HEK293 (cell line): ENCODE measurements at regions of chr16 and their contacts with region 1.

Region 1: DNA sequence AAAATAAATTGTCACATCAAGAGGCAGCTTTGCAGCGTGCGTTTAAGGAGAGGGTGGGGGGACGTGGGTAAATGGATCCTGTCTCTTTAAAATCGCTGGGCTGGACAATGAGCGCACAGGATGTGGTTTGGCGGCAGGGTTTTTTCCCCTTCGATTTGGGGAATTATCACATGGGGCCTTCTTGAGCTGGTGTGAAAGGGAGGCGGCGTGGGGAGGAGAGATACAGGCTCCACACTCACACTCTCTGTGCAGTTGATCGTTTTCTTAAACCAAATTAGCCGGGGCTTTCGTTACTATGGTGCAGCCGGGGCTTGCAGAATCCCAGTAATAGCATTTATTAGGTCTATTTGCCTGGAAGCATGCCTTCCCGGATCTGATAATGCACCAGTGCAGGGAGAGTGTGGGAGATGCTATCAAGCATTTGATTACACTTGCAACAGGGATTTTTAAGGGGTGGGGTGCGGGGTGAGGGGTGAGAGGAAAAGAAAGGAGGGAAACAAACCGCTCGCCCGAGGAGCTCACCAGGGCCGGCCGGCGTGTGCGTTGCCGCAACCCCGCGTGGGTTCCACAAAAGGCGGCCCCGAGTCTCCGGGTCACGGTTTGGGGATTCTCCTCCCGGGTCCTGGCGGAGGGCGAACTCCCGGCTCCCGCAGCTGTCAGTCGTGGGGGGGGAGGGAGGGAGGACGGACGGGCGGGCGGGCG is 58.9 kb upstream of the GSE1 start:
- H3K4me3 ChIP-seq: peak overlapping the region; percentile 69
- H3K27ac ChIP-seq: peak overlapping the region; percentile 91
- H3K4me1 ChIP-seq: peaks cover 5% of the 10 kb centered on the region
- CTCF ChIP-seq: no peak

Region 2: GRCh38 chr16:85528528-85529387 is 25.5 kb before region 1 on chr16:
- CTCF ChIA-PET with region 1: interaction called, 18 read pairs
- POLR2A ChIA-PET with region 1: interaction called, 4 read pairs
- H3K4me3 ChIP-seq: no peak overlapping the region
- H3K27ac ChIP-seq: no peak overlapping the region
- H3K4me1 ChIP-seq: peaks cover 14% of the 10 kb centered on the region
- CTCF ChIP-seq: no peak

Region 3: GRCh38 chr16:85569615-85570212 is 15.5 kb after region 1 on chr16:
- CTCF ChIA-PET with region 1: interaction called, 14 read pairs
- POLR2A ChIA-PET with region 1: interaction called, 7 read pairs
- H3K4me3 ChIP-seq: no peak overlapping the region
- H3K27ac ChIP-seq: peak overlapping the region; percentile 42; the same call in 1 of the 2 replicates
- H3K4me1 ChIP-seq: peaks cover 8% of the 10 kb centered on the region
- CTCF ChIP-seq: no peak

Region 4: DNA sequence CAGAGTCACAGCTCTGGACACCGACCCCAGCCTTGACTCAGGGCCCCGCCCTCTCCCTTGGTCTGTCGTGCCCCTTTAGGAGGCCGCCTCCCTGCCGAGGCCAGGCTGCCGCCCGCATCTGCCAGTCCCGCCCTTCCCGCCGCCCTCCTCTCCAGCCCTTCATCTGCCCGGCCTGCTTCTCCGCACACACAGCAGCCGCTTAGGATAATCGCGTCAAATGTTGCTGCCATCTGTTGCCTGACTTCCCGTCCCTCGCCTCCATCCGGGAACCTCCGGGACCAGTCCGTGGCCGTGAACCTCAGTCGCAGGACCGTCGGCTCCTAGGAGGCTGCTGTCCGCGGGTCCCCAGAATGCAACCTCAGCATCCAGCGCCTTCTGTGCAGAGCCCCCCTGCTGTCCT is 70.8 kb after region 1 on chr16:
- CTCF ChIA-PET with region 1: no interaction called
- POLR2A ChIA-PET with region 1: no interaction called
- H3K4me3 ChIP-seq: no peak overlapping the region
- H3K27ac ChIP-seq: no peak overlapping the region
- H3K4me1 ChIP-seq: peaks cover 11% of the 10 kb centered on the region
- CTCF ChIP-seq: no peak